ENCODE measurements at regions of chr6 and their contacts with region 1.

Region 1: GRCh38 chr6:109382576-109383437 is 540 bp upstream of the CD164 start:
- DNase-seq: peak; percentile 85 to 97 (median 91)
- ATAC-seq: peak; percentile 66
- H3K4me3 ChIP-seq: peak overlapping the region; percentile 61 to 78
- H3K4me3 Mint-ChIP-seq: peak overlapping the region; percentile 93
- H3K27ac ChIP-seq: peak overlapping the region; percentile 83 to 99
- H3K27ac Mint-ChIP-seq: peak overlapping the region; percentile 99
- H3K4me1 ChIP-seq: peaks cover 33% of the 10 kb centered on the region
- H3K4me1 Mint-ChIP-seq: peaks cover 45% of the 10 kb centered on the region
- H3K27me3 ChIP-seq: no peaks in the 10 kb centered on the region
- H3K27me3 Mint-ChIP-seq: no peaks in the 10 kb centered on the region
- CTCF ChIP-seq: peak; percentile 73

Region 2: GRCh38 chr6:107957909-107958688 is 1424.7 kb before region 1 on chr6 and contains the start of gene SEC63:
- CTCF ChIA-PET with region 1: no interaction called
- POLR2A ChIA-PET with region 1: no interaction called
- intact Hi-C with region 1: loop called in 1 of 2 experiments (anchors 2 kb)
- DNase-seq: peak; percentile 95 to 98 (median 96)
- ATAC-seq: peak; percentile 97
- H3K4me3 ChIP-seq: peak within 1 kb of the TSS; percentile 91
- H3K4me3 Mint-ChIP-seq: peak within 1 kb of the TSS; percentile 98
- H3K27ac ChIP-seq: peak within 1 kb of the TSS; percentile 81 to 82
- H3K27ac Mint-ChIP-seq: peak within 1 kb of the TSS; percentile 92
- H3K4me1 ChIP-seq: peaks cover 16% of the 10 kb centered on the region
- H3K4me1 Mint-ChIP-seq: peaks cover 37% of the 10 kb centered on the region
- H3K27me3 ChIP-seq: no peaks in the 10 kb centered on the region
- H3K27me3 Mint-ChIP-seq: no peaks in the 10 kb centered on the region
- CTCF ChIP-seq: no peak
- total RNA-seq, gene SEC63: 77.8 to 88.2 TPM

Region 3: DNA sequence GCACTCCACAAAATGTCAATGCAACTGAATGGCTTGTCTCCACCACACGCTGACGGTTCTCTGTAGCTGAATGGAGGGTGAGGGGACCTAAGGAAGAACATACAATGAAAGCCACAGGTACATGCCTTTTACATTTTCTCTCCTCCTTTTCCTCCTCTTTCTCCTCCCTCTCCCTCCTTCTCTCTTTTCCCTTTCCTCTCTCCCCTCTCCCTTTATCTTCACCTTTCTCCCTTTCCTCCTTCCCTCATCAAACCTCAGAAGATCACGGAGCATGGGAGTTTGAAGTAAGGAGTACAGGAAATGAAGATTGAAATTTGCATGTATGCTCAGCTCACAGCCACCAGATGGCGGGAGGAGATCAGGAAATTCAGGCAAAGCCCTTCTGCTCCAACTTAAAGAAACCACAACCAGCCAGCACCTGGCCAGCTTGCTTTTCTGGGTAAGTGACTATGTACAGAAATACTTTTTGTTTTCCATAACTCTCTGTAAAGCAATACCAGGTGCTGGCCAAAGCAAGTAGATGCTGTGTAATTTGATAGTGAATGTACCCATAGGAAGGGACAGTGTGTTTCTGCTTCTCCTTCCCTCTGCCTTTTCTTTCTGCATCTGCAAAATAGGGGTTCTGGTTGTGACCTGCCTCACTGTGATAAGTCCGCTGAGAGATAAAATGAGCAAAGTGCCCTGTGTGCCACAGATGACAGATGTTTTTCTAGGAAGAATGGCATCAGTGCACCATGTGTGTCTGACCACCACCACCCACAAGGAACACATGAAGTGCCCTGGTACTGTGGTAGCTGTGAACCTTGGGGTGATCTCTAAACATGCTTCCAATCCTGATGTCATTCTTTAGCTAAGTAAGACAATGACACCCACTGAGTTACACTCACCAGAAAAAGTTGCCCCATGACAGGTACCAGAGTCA is 840.7 kb before region 1 on chr6:
- CTCF ChIA-PET with region 1: interaction called, 13 read pairs
- POLR2A ChIA-PET with region 1: no interaction called
- intact Hi-C with region 1: loop called in 1 of 2 experiments (anchors 5 kb)
- DNase-seq: peak; percentile 39 to 87 (median 69)
- ATAC-seq: peak; percentile 92
- H3K4me3 ChIP-seq: no peak overlapping the region
- H3K4me3 Mint-ChIP-seq: no peak overlapping the region
- H3K27ac ChIP-seq: no peak overlapping the region
- H3K27ac Mint-ChIP-seq: no peak overlapping the region
- H3K4me1 ChIP-seq: peaks cover 12% of the 10 kb centered on the region
- H3K4me1 Mint-ChIP-seq: peaks cover 16% of the 10 kb centered on the region
- H3K27me3 ChIP-seq: no peaks in the 10 kb centered on the region
- H3K27me3 Mint-ChIP-seq: no peaks in the 10 kb centered on the region
- CTCF ChIP-seq: peak; percentile 95

Region 4: DNA sequence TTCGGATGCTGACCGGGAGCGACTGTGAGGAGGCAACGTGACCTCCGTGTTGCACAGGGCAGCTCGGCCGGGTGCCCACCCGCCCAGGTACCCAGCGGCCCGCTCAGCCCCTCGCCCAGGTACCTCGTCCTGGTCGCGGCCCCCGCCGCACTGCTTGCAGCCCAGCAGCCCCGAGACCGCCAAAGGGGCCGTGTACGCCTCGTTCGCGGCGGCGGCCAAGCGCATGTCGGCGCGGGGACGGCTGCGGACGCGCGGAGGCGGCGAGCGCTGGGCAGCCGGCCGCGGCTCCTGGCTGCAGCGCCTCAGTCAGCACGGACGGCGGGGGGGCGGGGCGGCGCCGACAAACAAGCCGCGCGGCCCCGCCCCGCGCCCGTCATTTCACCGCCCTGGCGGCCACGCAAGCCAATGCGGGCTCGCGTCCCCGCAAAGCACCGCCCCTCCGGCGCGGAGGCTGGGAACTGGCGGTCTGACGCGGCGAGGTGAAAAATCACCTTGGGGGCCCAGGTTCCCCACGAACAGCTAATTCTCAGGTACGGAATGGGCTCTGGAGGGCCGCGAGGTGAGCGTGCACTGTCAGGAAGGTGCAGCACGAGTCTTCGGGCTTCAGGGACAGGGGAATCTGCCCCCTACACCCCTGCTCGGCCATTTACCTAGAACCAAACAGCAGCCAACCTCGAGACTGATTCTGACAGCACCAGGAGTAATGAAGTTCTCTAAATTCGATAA is 373.4 kb before region 1 on chr6:
- CTCF ChIA-PET with region 1: no interaction called
- POLR2A ChIA-PET with region 1: no interaction called
- intact Hi-C with region 1: loop called (anchors 5 kb)
- DNase-seq: peak; percentile 83 to 96 (median 93)
- ATAC-seq: peak; percentile 96
- H3K4me3 ChIP-seq: peak overlapping the region; percentile 72 to 94
- H3K4me3 Mint-ChIP-seq: peak overlapping the region; percentile 98
- H3K27ac ChIP-seq: peak overlapping the region; percentile 89 to 92
- H3K27ac Mint-ChIP-seq: peak overlapping the region; percentile 100
- H3K4me1 ChIP-seq: peaks cover 53% of the 10 kb centered on the region
- H3K4me1 Mint-ChIP-seq: peaks cover 71% of the 10 kb centered on the region
- H3K27me3 ChIP-seq: no peaks in the 10 kb centered on the region
- H3K27me3 Mint-ChIP-seq: no peaks in the 10 kb centered on the region
- CTCF ChIP-seq: no peak

Region 5: GRCh38 chr6:109440331-109441068 is 57.7 kb after region 1 on chr6 and contains the starts of genes PPIL6 and SMPD2:
- CTCF ChIA-PET with region 1: interaction called, 16 read pairs
- POLR2A ChIA-PET with region 1: interaction called, 36 read pairs
- intact Hi-C with region 1: loop called (anchors 1 kb)
- DNase-seq: peak; percentile 61 to 92 (median 75)
- ATAC-seq: peak; percentile 79
- H3K4me3 ChIP-seq: peak within 1 kb of the TSS; percentile 68 to 92
- H3K4me3 Mint-ChIP-seq: peak within 1 kb of the TSS; percentile 89
- H3K27ac ChIP-seq: peak within 1 kb of the TSS; percentile 69 to 83
- H3K27ac Mint-ChIP-seq: peak within 1 kb of the TSS; percentile 93
- H3K4me1 ChIP-seq: peaks cover 26% of the 10 kb centered on the region
- H3K4me1 Mint-ChIP-seq: peaks cover 35% of the 10 kb centered on the region
- H3K27me3 ChIP-seq: no peaks in the 10 kb centered on the region
- H3K27me3 Mint-ChIP-seq: no peaks in the 10 kb centered on the region
- CTCF ChIP-seq: peak; percentile 31
- total RNA-seq, gene PPIL6: 1.3 to 1.4 TPM
- total RNA-seq, gene SMPD2: 22.8 to 23.9 TPM

Region 6: DNA sequence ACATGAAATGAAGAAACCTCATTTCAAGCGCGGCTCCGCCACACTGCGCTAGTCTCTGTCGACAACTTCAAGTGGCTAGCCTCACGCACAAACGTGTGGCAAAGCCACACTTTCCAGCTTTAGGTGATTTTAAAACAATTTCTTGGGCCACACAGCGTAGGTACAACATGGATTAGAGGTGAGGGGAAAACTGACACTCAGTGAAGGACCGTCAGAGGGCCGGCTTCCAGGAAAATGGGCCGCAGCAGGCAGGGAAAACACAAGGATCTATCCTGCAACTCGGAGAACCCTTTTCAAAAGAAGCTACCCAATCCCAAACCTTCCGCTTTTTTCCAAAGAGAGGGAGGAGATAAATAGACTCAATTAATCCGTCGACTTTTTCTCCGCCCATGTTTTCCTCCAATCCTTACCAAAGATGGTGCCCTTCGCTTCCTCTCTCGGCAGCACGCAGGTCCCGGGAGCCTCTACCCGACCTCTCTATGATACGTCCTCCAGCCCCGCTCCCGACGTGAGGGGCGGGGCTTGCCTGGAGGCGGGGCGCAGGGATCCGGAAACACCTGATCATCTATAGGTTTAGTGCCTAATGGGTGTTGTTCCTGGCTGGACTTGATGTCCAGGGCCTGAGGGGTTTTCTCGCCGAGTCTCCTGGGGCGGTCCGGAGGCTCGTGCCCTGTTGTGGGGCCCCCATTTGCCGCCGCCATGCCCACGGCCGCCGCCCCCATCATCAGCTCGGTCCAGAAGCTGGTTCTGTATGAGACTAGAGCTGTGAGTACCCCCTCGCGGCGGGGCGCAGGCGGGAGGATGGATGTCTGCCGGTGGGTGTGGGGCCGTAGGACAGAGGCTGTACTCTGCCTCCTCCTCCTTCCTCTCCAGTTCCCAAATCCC is 308.2 kb after region 1 on chr6 and contains the starts of genes AK9 and FIG4:
- CTCF ChIA-PET with region 1: no interaction called
- POLR2A ChIA-PET with region 1: interaction called, 13 read pairs
- intact Hi-C with region 1: loop called (anchors 1 to 5 kb)
- DNase-seq: peak; percentile 68 to 93 (median 90)
- ATAC-seq: peak; percentile 96
- H3K4me3 ChIP-seq: peak within 1 kb of the TSS; percentile 85 to 91
- H3K4me3 Mint-ChIP-seq: peak within 1 kb of the TSS; percentile 93
- H3K27ac ChIP-seq: peak within 1 kb of the TSS; percentile 81 to 91
- H3K27ac Mint-ChIP-seq: peak within 1 kb of the TSS; percentile 98
- H3K4me1 ChIP-seq: peaks cover 22% of the 10 kb centered on the region
- H3K4me1 Mint-ChIP-seq: peaks cover 27% of the 10 kb centered on the region
- H3K27me3 ChIP-seq: no peaks in the 10 kb centered on the region
- H3K27me3 Mint-ChIP-seq: no peaks in the 10 kb centered on the region
- CTCF ChIP-seq: no peak
- total RNA-seq, gene AK9: 5.1 to 6.5 TPM
- total RNA-seq, gene FIG4: 2.3 TPM

Region 7: DNA sequence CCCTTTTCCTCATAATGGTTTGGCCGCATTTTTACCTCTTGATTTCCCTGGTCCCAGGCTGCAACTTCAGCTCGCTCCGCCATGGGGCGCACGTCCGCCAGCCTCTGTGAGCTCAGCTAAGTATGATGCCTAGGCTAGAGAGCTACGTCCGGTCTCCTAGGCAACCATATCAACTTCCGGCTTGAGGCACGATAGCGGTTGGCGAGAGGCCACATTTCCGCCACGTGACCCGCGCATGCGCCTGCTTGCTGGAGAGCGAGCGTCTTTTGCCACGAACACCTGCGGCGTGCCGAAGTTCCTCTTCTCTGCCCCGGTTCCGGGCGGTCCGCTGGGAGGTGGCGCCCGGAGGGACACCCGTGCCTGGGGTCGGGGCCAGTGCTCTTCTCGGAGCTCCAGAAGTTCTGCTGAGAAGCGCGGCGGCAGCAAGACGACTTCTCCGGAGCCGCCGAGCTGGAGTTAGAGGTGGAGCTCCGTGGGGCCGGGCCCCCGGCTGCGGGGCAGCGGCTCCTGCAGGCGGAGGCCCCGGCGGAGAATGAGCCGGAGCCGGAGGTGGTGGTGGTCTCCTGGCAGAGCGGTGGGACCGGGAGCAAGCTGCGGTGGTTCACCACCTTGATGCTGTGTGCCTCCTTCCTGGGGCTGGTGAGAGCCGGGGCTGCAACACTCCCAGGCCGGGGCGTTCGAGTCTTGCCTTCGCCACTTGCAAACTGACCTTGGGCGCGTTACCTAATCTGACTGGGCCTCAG is 1876.5 kb after region 1 on chr6:
- CTCF ChIA-PET with region 1: no interaction called
- POLR2A ChIA-PET with region 1: no interaction called
- intact Hi-C with region 1: loop called in 1 of 2 experiments (anchors 5 kb)
- DNase-seq: peak; percentile 98 to 100 (median 99)
- ATAC-seq: peak; percentile 96
- H3K4me3 ChIP-seq: peak overlapping the region; percentile 68 to 82
- H3K4me3 Mint-ChIP-seq: peak overlapping the region; percentile 86
- H3K27ac ChIP-seq: peak overlapping the region; percentile 90
- H3K27ac Mint-ChIP-seq: peak overlapping the region; percentile 90
- H3K4me1 ChIP-seq: peaks cover 18% of the 10 kb centered on the region
- H3K4me1 Mint-ChIP-seq: peaks cover 28% of the 10 kb centered on the region
- H3K27me3 ChIP-seq: no peaks in the 10 kb centered on the region
- H3K27me3 Mint-ChIP-seq: no peaks in the 10 kb centered on the region
- CTCF ChIP-seq: peak; percentile 80

Measured in CD8-positive, alpha-beta T cell (primary cell).